Aorta (tissue), 5 donors: ENCODE measurements at regions of chrX and their contacts with region 1.

Region 1: GRCh38 chrX:140664939-140665338 is 44.6 kb upstream of the LINC00632 start:
- DNase-seq: no peak
- ATAC-seq: no peak
- H3K4me3 ChIP-seq: no peak overlapping the region
- H3K27ac ChIP-seq: no peak overlapping the region
- H3K4me1 ChIP-seq: no peaks in the 10 kb centered on the region
- H3K27me3 ChIP-seq: no peaks in the 10 kb centered on the region

Region 2: GRCh38 chrX:140057001-140057411 is 607.9 kb before region 1 on chrX:
- intact Hi-C with region 1: loop called (anchors 5 to 10 kb)
- DNase-seq: peak; percentile 76 to 89
- ATAC-seq: peak; percentile 80
- H3K4me3 ChIP-seq: no peak overlapping the region
- H3K27ac ChIP-seq: no peak overlapping the region
- H3K4me1 ChIP-seq: no peaks in the 10 kb centered on the region
- H3K27me3 ChIP-seq: no peaks in the 10 kb centered on the region

Region 3: DNA sequence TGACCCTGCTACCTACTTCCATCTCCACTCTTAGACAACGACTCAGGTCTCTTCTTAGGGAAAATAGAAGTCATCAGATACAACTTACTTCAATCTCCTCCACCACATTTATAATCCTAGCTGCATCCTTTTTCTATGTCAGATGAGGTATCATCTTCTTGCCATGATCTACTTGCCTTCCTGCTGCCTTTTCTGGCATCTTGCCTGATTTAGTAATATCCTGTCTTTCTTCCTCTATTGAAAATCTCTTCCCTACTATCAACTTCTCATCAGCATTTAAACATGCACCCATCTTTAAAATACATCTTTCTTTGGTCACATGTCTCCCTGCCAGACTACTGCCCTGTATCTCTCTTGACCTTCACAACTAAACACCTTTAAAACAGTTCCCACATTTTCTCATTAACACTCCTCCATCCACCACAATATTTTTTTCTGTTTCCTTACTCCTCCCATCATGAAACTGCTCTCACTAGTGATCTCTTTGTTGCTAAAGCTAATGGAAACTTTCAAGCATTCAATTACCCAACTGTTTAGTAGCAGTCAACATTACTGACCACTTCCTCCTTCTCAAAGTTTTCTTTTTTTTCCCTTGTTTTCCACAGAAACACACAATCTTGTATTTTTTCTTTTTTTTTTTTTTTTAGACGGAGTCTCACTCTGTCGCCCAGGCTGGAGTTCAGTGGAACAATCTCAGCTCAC is 598.8 kb before region 1 on chrX:
- intact Hi-C with region 1: loop called in 1 of 2 experiments (anchors 10 kb)
- DNase-seq: no peak
- ATAC-seq: no peak
- H3K4me3 ChIP-seq: no peak overlapping the region
- H3K27ac ChIP-seq: no peak overlapping the region
- H3K4me1 ChIP-seq: no peaks in the 10 kb centered on the region
- H3K27me3 ChIP-seq: no peaks in the 10 kb centered on the region

Region 4: GRCh38 chrX:140099221-140099620 is 565.7 kb before region 1 on chrX:
- intact Hi-C with region 1: no loop called
- DNase-seq: no peak
- ATAC-seq: no peak
- H3K4me3 ChIP-seq: no peak overlapping the region
- H3K27ac ChIP-seq: no peak overlapping the region
- H3K4me1 ChIP-seq: no peaks in the 10 kb centered on the region
- H3K27me3 ChIP-seq: no peaks in the 10 kb centered on the region

Region 5: DNA sequence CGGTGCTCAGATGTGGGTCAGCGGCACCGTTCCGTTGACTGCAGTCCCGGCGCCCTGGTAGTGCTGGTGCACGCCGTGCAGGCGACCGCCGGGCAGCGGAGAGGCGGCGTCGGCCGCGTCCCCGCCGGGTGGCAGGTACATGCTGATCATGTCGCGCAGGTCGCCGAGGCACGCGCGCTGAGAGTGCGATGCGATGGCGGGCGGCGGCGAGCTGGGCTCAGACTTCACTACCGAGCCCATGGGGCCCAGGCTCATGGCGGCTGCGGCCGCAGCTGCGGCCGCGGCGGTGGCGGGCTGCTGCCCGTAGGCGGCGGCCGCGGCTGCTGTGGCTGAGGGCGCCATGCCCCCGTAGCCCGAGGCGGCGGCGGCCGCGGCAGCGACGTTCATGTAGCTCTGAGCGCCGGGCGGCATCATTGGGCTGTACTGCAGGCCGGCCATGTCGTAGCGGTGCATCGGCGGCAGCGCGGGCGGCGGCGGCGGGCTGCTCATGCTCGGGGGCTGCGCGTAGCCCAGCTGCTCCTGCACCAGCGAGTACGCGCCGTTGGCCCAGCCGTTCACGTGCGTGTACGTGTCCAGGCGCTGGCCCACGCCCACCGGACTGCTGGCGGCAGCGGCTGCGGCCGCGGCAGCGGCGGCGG is 161.1 kb before region 1 on chrX:
- intact Hi-C with region 1: no loop called
- DNase-seq: peak in 1 of 2 donors; percentile 79
- ATAC-seq: peak; percentile 13
- H3K4me3 ChIP-seq: no peak overlapping the region
- H3K27ac ChIP-seq: no peak overlapping the region
- H3K4me1 ChIP-seq: no peaks in the 10 kb centered on the region
- H3K27me3 ChIP-seq: no peaks in the 10 kb centered on the region